Panc1 (cell line): ENCODE measurements at regions of chr1 and their contacts with region 1.

Region 1: DNA sequence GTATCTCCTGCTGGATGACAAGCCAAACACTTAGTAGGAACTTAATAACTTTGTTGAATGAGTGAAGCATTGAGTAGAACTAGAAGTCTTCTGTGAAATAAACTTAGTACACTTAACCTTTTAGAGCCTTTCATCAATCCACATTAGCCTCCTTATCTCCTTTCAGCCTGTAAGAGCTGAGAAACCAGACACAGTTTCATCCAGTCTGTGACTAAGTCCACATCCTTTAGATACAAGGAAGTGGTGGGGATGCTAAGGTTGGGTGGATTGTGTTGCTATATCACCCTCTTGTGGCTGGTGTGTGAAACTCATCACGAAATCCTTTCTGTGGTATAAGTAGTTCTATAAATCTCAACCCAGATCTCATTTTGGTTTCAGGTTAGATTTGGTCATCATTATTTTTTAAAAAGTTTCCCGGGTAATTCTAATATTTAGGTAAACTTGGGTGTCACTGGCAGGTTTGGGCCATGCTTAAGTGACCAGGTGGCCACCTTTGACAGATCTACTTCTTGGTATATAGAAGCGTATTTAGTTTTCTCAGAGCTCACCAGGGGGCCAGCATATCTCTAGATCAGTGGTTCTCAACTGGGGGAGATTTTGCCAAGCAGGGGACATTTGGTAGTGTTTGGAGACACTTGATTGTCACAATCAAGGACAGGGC is 27.8 kb upstream of the CD84 start:
- DNase-seq: peak; percentile 35
- ATAC-seq: peak; percentile 92
- H3K4me3 ChIP-seq: no peak overlapping the region
- H3K27ac ChIP-seq: no peak overlapping the region
- H3K4me1 ChIP-seq: no peaks in the 10 kb centered on the region
- H3K27me3 ChIP-seq: no peaks in the 10 kb centered on the region
- CTCF ChIP-seq: peak; percentile 75

Region 2: DNA sequence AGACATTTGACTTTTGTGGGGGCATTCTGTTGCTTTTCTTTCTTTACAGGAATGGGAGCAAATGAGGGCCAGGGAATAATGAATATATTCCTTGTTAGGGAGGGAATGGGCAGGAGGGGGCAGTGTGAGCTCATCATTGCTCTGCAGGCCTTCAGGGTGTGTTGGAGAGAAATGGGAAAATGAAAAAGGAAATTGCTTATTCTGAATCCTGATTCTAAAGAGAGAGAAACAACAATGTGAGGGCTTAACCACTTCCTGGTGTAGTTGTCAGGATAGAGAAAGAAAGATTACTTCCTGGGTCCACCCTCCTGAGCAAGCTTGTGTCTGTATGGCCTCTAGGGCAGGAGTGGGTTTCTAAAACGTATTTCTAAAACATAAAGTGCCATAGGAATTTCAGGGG is 178.5 kb before region 1 on chr1:
- CTCF ChIA-PET with region 1: interaction called, 3 read pairs
- POLR2A ChIA-PET with region 1: no interaction called
- in situ Hi-C with region 1: no loop called
- intact Hi-C with region 1: loop called (anchors 1 kb)
- DNase-seq: no peak
- ATAC-seq: peak; percentile 83
- H3K4me3 ChIP-seq: no peak overlapping the region
- H3K27ac ChIP-seq: no peak overlapping the region
- H3K4me1 ChIP-seq: no peaks in the 10 kb centered on the region
- H3K27me3 ChIP-seq: no peaks in the 10 kb centered on the region; the same call in 1 of the 2 replicates
- CTCF ChIP-seq: peak; percentile 77

Region 3: DNA sequence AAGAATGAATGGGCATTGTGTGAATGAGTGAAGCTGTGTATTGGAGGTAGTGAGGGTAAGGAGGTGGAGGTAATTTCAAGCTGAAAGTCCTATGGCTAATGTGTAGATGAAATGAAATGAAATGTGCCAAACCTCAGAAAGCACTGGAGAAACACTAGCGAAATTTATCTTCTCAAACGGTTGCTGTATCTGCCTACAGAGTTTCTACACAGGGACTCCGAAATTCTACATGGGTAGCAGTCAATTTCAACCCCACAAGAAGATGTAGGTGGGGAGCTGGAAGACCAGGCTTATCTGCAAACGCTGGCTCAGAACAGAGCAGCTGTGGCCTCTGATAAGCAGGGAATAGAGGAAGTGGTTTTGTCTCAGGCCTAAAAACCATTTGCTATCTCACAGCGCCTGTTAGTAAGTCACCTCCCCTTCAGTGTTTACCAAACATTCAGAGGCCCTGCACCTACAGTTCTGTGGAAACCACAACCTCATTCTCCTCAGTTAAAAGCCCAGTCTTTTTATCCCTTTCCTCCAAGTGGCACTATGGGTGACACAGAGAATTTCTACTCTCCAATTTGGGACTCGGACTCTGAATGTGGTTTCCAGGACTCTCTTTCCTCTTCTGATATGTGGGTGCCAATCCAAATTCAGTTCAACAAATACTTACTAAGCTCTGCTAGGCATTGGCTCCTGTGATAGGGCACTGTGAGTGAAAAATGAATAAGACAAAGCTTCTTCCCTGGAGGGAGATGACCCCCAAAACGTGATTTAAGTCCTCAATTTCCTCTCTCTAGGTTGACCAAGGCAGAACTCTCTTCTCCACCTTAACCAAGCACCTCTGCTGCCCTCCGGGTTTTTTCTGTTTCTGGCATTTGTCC is 66.9 kb before region 1 on chr1:
- CTCF ChIA-PET with region 1: no interaction called
- POLR2A ChIA-PET with region 1: no interaction called
- in situ Hi-C with region 1: no loop called
- intact Hi-C with region 1: loop called (anchors 5 kb)
- DNase-seq: no peak
- ATAC-seq: no peak
- H3K4me3 ChIP-seq: no peak overlapping the region
- H3K27ac ChIP-seq: no peak overlapping the region
- H3K4me1 ChIP-seq: no peaks in the 10 kb centered on the region
- H3K27me3 ChIP-seq: 0 out of 2 replicates have a peak, but pooled peaks cover 5% of the 10 kb centered on the region
- CTCF ChIP-seq: no peak

Region 4: DNA sequence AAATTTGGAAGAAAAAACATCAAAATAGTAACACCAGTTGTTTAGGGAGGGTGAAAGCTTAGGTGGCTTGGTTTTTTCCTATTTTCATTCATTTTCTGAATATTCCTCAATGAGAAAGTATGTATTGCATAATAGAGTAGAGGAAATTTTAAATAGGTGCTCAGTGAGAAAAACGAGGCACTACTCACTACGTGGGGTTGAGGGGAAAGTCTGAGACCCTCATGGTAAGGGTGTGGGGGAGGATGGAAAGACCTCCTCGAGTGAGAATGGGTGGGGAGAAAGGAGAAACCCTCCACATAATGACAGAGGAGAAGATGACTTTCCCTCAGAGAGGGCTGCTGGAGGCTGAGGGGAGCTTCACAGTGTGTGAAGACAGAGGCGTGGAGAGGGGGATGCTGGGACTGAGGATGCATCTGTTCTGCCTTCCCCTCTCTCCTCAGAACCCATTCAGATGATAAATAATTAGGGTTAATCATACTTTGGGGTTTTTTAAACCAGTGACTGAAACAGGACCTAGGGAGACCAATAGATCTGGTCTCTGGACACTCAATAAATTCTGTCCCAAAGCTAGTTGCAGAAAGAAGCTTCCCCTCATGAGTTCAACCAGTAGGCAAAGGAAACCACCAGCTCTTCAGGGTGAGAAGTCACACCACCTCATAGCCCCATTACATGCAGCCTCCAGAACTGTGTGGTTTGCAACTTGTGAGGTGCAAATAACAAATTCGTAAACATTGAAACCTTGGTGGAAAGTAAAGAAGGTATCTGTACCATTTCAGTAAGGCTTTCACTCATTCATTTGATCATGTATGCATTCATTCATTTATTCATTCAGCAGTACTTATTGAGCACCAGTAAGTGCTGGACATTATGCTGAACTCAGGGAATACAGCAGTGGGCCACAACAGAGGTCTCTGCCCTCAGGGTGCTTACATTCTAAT is 149.0 kb after region 1 on chr1:
- CTCF ChIA-PET with region 1: no interaction called
- POLR2A ChIA-PET with region 1: no interaction called
- in situ Hi-C with region 1: no loop called
- intact Hi-C with region 1: no loop called
- DNase-seq: no peak
- ATAC-seq: no peak
- H3K4me3 ChIP-seq: no peak overlapping the region
- H3K27ac ChIP-seq: no peak overlapping the region
- H3K4me1 ChIP-seq: no peaks in the 10 kb centered on the region
- H3K27me3 ChIP-seq: peaks cover 8% of the 10 kb centered on the region; the same call in 1 of the 2 replicates
- CTCF ChIP-seq: no peak